ENCODE measurements at regions of chr17 and their contacts with region 1.

Region 1: DNA sequence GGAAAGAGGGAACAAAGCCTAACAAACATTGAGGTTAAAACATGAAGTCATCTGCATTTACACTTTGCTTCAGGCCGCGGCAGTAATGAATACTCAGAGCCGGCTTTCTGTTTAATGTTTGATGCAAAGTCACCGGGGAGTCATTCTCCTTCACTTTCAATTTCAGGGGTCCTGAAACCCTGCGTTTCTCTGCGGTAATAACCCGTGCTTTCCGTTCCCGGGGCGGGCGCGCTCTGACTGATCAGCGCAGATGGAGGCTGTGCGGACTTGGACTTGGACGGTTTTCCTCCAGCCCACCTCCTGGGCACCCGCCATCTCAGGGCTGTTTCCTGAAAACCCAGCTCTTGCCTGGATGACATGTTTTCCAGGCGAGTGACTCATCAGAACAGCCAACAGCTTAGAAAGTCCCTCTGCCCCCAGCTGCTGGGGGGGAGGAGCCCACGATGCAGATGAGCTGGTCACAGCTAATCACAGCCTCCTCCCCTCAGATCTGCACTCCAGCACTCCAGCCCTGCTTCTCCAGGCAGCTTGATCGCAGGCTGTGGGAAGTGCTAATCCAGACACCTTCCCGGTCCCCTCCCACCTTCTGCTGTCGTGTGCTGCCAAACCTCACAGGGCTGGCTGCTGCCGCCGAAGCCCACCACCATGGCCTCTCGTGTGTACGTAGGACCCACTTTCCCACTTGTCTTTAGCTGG is 158.6 kb upstream of the CHMP6 start:
- DNase-seq: peak; percentile 43 to 83 (median 67)
- ATAC-seq: peak; percentile 93
- H3K4me3 ChIP-seq: peak overlapping the region; percentile 36
- H3K4me3 Mint-ChIP-seq: peak overlapping the region; percentile 74 to 89 (median 88)
- H3K27ac ChIP-seq: peak overlapping the region; percentile 80
- H3K27ac Mint-ChIP-seq: peak overlapping the region; percentile 83 to 99 (median 94)
- H3K4me1 ChIP-seq: peaks cover 9 to 12% of the 10 kb centered on the region in 2 donors
- H3K4me1 Mint-ChIP-seq: peaks cover 13 to 67% (median 40%) of the 10 kb centered on the region in 7 donors
- H3K27me3 ChIP-seq: no peaks in the 10 kb centered on the region
- H3K27me3 Mint-ChIP-seq: no peaks in the 10 kb centered on the region

Region 2: GRCh38 chr17:80780381-80781198 is 52.4 kb before region 1 on chr17:
- CTCF ChIA-PET with region 1: no interaction called
- POLR2A ChIA-PET with region 1: no interaction called
- intact Hi-C with region 1: loop called in 1 of 2 experiments (anchors 2 kb)
- DNase-seq: peak in 3 of 9 donors; percentile 29 to 57 (median 43)
- ATAC-seq: peak; percentile 40
- H3K4me3 ChIP-seq: peak overlapping the region; percentile 45
- H3K4me3 Mint-ChIP-seq: peak overlapping the region; percentile 62 to 96 (median 82)
- H3K27ac ChIP-seq: peak overlapping the region; percentile 70
- H3K27ac Mint-ChIP-seq: peak overlapping the region; percentile 87 to 99 (median 94)
- H3K4me1 ChIP-seq: peaks cover 38 to 57% of the 10 kb centered on the region in 2 donors
- H3K4me1 Mint-ChIP-seq: peaks cover 30 to 90% (median 77%) of the 10 kb centered on the region in 7 donors
- H3K27me3 ChIP-seq: no peaks in the 10 kb centered on the region
- H3K27me3 Mint-ChIP-seq: no peaks in the 10 kb centered on the region

Region 3: GRCh38 chr17:80819461-80820161 is 13.4 kb before region 1 on chr17:
- CTCF ChIA-PET with region 1: interaction called, 4 read pairs
- POLR2A ChIA-PET with region 1: interaction called, 13 read pairs
- intact Hi-C with region 1: no loop called
- DNase-seq: peak in 1 of 9 donors; percentile 27
- ATAC-seq: peak; percentile 62
- H3K4me3 ChIP-seq: no peak overlapping the region
- H3K4me3 Mint-ChIP-seq: peak overlapping the region; percentile 33 to 71 (median 65)
- H3K27ac ChIP-seq: peak overlapping the region; percentile 32
- H3K27ac Mint-ChIP-seq: peak overlapping the region; percentile 23 to 96 (median 80)
- H3K4me1 ChIP-seq: peaks cover 0 to 13% of the 10 kb centered on the region in 2 donors
- H3K4me1 Mint-ChIP-seq: peaks cover 27 to 81% (median 49%) of the 10 kb centered on the region in 7 donors
- H3K27me3 ChIP-seq: no peaks in the 10 kb centered on the region
- H3K27me3 Mint-ChIP-seq: no peaks in the 10 kb centered on the region

Region 4: DNA sequence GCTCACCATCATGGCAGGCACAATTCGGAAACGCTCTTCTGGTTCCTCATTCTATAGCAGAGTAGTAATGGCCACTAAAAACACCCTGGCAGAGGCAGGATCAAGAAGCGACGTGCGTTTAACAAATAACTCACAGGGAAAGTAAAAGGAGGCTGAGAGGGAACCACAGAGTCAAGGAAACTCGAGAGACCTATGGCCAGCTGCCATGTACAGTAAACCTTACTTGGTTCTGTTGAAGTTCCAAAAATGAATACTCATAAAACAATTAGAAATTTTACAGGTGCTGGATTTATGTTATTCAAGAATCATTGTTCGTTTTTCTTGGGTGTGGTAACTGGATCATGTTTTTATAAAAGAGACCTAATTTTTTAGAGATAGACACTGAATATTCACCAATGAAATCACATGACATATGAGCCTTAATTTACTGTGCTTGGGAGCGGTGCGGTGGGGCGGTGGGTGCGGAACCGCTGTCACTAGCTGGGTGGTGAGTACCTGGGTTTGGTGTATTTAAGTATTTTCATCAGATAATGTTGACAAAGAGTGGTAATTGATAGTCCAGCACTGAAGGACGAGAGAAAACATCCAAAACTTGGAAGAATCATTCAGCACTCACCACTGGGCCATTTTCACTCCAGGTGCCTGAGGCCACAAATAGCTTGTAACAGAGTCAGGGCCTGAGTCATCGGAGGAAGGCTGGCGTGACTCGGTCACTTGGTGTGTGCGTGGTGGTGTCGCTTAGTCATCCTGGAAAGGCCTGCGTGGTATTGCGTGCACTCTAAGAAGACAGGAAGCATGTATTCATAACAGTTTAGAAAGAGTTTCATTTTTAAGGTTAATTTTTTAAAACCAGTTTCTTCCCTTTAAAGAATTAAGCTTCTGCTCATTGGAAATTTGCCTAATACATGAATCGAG is 23.2 kb after region 1 on chr17:
- CTCF ChIA-PET with region 1: interaction called, 3 read pairs
- POLR2A ChIA-PET with region 1: interaction called, 4 read pairs
- intact Hi-C with region 1: loop called in 1 of 2 experiments (anchors 1 kb)
- DNase-seq: peak in 2 of 9 donors; percentile 26 to 80
- ATAC-seq: peak; percentile 92
- H3K4me3 ChIP-seq: no peak overlapping the region
- H3K4me3 Mint-ChIP-seq: peak overlapping the region in 6 of 10 donors; percentile 18 to 71 (median 30)
- H3K27ac ChIP-seq: peak overlapping the region; percentile 19
- H3K27ac Mint-ChIP-seq: peak overlapping the region in 8 of 9 donors; percentile 23 to 95 (median 70)
- H3K4me1 ChIP-seq: peaks cover 10 to 27% of the 10 kb centered on the region in 2 donors
- H3K4me1 Mint-ChIP-seq: peaks cover 23 to 78% (median 55%) of the 10 kb centered on the region in 7 donors
- H3K27me3 ChIP-seq: no peaks in the 10 kb centered on the region
- H3K27me3 Mint-ChIP-seq: no peaks in the 10 kb centered on the region

Region 5: GRCh38 chr17:80876950-80877728 is 44.1 kb after region 1 on chr17:
- CTCF ChIA-PET with region 1: interaction called, 4 read pairs
- POLR2A ChIA-PET with region 1: no interaction called
- intact Hi-C with region 1: loop called in 1 of 2 experiments (anchors 1 kb)
- DNase-seq: peak in 6 of 9 donors; percentile 18 to 68 (median 36)
- ATAC-seq: peak; percentile 46
- H3K4me3 ChIP-seq: peak overlapping the region; percentile 22
- H3K4me3 Mint-ChIP-seq: peak overlapping the region; percentile 70 to 96 (median 79)
- H3K27ac ChIP-seq: peak overlapping the region; percentile 5
- H3K27ac Mint-ChIP-seq: peak overlapping the region; percentile 20 to 99 (median 86)
- H3K4me1 ChIP-seq: peaks cover 15 to 35% of the 10 kb centered on the region in 2 donors
- H3K4me1 Mint-ChIP-seq: peaks cover 31 to 55% (median 45%) of the 10 kb centered on the region in 7 donors
- H3K27me3 ChIP-seq: no peaks in the 10 kb centered on the region
- H3K27me3 Mint-ChIP-seq: no peaks in the 10 kb centered on the region